ENCODE measurements at regions of chr1 and their contacts with region 1.

Region 1: GRCh38 chr1:67535474-67535873 is 105.3 kb upstream of the SERBP1 start:
- DNase-seq: no peak
- H3K4me3 ChIP-seq: no peak overlapping the region
- H3K27ac ChIP-seq: no peak overlapping the region
- H3K4me1 ChIP-seq: peaks cover 15% of the 10 kb centered on the region
- H3K27me3 ChIP-seq: no peaks in the 10 kb centered on the region
- CTCF ChIP-seq: peak; percentile 99 to 100 (median 99)

Region 2: DNA sequence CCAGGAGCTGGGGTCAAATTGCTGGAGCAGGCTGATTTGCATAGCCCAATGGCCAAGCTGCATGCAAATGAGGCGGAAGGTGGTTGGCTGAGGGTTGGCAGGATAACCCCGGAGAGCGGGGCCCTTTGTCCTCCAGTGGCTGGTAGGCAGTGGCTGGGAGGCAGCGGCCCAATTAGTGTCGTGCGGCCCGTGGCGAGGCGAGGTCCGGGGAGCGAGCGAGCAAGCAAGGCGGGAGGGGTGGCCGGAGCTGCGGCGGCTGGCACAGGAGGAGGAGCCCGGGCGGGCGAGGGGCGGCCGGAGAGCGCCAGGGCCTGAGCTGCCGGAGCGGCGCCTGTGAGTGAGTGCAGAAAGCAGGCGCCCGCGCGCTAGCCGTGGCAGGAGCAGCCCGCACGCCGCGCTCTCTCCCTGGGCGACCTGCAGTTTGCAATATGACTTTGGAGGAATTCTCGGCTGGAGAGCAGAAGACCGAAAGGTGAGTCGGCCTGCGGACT is 149.6 kb after region 1 on chr1 and contains the start of gene GADD45A:
- dilution Hi-C with region 1: loop called (anchors 25 kb)
- DNase-seq: no peak
- H3K4me3 ChIP-seq: peak within 1 kb of the TSS; percentile 90 to 94 (median 93)
- H3K27ac ChIP-seq: peak within 1 kb of the TSS; percentile 99
- H3K4me1 ChIP-seq: peaks cover 40% of the 10 kb centered on the region
- H3K27me3 ChIP-seq: no peaks in the 10 kb centered on the region
- CTCF ChIP-seq: peak in 1 of 3 experiments; percentile 6
- polyA plus RNA-seq, gene GADD45A: 109 to 151 TPM (median 124 TPM) in 3 replicates

Region 3: GRCh38 chr1:67713057-67713846 is 177.8 kb after region 1 on chr1:
- dilution Hi-C with region 1: no loop called
- DNase-seq: no peak
- H3K4me3 ChIP-seq: peak overlapping the region in 1 of 3 experiments; percentile 22
- H3K27ac ChIP-seq: peak overlapping the region; percentile 62
- H3K4me1 ChIP-seq: peaks cover 72% of the 10 kb centered on the region
- H3K27me3 ChIP-seq: no peaks in the 10 kb centered on the region
- CTCF ChIP-seq: no peak